ENCODE measurements at regions of chr19 and their contacts with region 1.

Region 1: GRCh38 chr19:16153582-16154336 is 10.3 kb downstream of the HSH2D start:
- DNase-seq: no peak
- ATAC-seq: no peak
- H3K4me3 ChIP-seq: no peak overlapping the region
- H3K27ac ChIP-seq: no peak overlapping the region
- H3K4me1 ChIP-seq: no peaks in the 10 kb centered on the region
- H3K27me3 ChIP-seq: no peaks in the 10 kb centered on the region
- CTCF ChIP-seq: no peak

Region 2: DNA sequence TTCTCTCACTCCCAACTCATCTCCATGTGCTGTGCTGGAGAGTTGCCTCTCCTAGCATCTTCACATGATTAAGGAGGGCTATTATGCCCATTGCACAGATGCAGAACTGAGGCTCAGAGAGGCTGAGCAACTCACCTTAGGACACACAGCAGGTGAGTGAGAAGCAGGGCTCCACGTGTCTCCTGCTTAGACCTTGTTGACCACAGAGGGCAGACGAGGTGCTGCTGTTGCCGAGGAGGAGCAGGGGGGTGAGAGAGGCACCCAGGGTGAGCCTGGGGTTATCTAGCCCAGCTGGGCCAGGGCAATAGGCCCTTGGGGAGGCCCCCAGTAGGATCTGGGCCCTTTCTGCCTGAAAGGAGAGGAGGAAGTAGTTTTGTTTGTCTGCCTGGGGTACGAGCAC is 12.7 kb before region 1 on chr19:
- CTCF ChIA-PET with region 1: no interaction called
- POLR2A ChIA-PET with region 1: interaction called, 10 read pairs
- in situ Hi-C with region 1: no loop called
- intact Hi-C with region 1: no loop called
- DNase-seq: no peak
- ATAC-seq: peak; percentile 36; the same call in 1 of the 2 replicates
- H3K4me3 ChIP-seq: no peak overlapping the region
- H3K27ac ChIP-seq: no peak overlapping the region
- H3K4me1 ChIP-seq: no peaks in the 10 kb centered on the region
- H3K27me3 ChIP-seq: no peaks in the 10 kb centered on the region
- CTCF ChIP-seq: no peak

Region 3: GRCh38 chr19:16185123-16185767 is 31.5 kb after region 1 on chr19 and contains the start of gene FAM32A:
- CTCF ChIA-PET with region 1: no interaction called
- POLR2A ChIA-PET with region 1: no interaction called
- in situ Hi-C with region 1: no loop called
- intact Hi-C with region 1: no loop called
- DNase-seq: peak; percentile 96
- ATAC-seq: peak; percentile 94
- H3K4me3 ChIP-seq: peak within 1 kb of the TSS; percentile 73 to 97
- H3K27ac ChIP-seq: peak within 1 kb of the TSS; percentile 92
- H3K4me1 ChIP-seq: no peaks in the 10 kb centered on the region; the same call in 1 of the 2 replicates
- H3K27me3 ChIP-seq: no peaks in the 10 kb centered on the region
- CTCF ChIP-seq: no peak
- total RNA-seq, gene FAM32A: 44.6 TPM

Region 4: DNA sequence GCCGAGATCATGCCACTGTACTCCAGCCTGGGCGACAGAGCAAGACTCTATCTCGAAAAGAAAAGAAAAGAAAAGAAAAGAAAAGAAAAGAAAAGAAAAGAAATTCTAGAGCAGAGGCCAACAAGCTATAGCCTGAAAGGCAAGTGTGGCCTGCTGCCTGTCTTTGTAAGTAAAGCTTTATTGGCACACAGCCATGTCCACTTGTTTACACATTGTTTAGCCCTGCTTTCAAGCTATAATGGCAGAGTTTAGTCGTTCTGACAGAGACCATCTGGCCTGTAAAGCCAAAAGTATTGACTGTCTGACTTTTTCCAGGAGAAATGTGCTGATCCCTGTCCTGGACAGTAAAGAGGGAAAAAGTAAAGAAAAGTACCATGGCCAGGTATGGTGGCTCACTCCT is 584.2 kb after region 1 on chr19:
- CTCF ChIA-PET with region 1: no interaction called
- POLR2A ChIA-PET with region 1: no interaction called
- in situ Hi-C with region 1: no loop called
- intact Hi-C with region 1: no loop called
- DNase-seq: no peak
- ATAC-seq: no peak
- H3K4me3 ChIP-seq: no peak overlapping the region
- H3K27ac ChIP-seq: no peak overlapping the region
- H3K4me1 ChIP-seq: peaks cover 7% of the 10 kb centered on the region; the same call in 1 of the 2 replicates
- H3K27me3 ChIP-seq: no peaks in the 10 kb centered on the region
- CTCF ChIP-seq: no peak